ENCODE measurements at regions of chr6 and their contacts with region 1.

Region 1: DNA sequence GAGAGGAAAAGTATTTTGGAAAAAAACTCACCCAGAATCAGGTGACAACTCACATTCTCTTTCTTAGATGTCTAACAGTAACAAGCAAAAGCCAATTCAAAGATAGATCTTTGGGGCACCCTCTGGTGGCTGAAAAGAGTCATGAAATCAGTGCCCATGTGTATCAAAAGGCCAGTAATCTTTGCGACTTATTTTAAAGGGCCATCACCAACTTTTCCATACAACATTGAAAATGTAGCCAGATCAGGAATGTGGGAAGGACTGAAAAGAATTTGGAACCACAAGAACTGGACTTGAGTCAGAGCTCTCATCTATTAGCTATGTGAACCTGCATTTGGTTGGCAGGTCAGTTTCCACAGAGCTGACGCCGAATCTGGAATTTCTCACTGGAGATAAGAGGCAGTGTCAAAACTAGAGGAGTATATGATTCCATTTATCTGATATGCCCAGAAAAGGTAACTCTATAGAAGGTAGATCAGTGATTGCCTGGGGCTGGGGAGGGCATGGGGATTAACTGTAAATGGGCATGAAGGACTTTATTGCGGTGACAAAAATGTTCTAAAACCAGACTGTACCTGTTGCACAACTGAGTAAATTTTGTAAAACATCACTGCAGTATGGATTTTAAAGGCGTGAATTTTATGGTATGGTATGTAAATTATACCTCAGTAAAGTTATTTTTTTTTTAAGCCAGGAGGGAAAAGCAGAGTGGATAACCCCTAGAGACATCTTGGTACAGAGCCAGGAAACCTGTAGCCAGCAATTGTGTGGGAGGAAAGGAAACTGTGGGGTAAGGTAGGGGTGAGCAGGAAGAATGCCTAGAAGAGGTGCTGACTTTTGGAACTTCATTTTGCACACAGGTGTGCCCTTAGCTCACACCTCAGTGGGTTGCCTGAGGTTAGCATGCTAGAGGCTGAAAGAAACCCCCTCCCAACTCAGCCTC is 117.1 kb upstream of the ASF1A start:
- DNase-seq: peak; percentile 79
- ATAC-seq: peak; percentile 87
- H3K4me3 ChIP-seq: no peak overlapping the region
- H3K27ac ChIP-seq: no peak overlapping the region
- H3K4me1 ChIP-seq: peaks cover 4% of the 10 kb centered on the region; the same call in 1 of the 2 replicates
- H3K27me3 ChIP-seq: peaks cover 4% of the 10 kb centered on the region
- CTCF ChIP-seq: peak; percentile 73
- POLR2A ChIP-seq: no peak
- RAD21 ChIP-seq: peak; percentile 72

Region 2: GRCh38 chr6:118397671-118398465 is 379.0 kb before region 1 on chr6:
- CTCF ChIA-PET with region 1: no interaction called
- POLR2A ChIA-PET with region 1: no interaction called
- dilution Hi-C with region 1: no loop called
- in situ Hi-C with region 1: no loop called
- intact Hi-C with region 1: no loop called
- DNase-seq: no peak
- ATAC-seq: no peak
- H3K4me3 ChIP-seq: no peak overlapping the region
- H3K27ac ChIP-seq: no peak overlapping the region
- H3K4me1 ChIP-seq: no peaks in the 10 kb centered on the region
- H3K27me3 ChIP-seq: no peaks in the 10 kb centered on the region
- CTCF ChIP-seq: no peak
- POLR2A ChIP-seq: no peak
- RAD21 ChIP-seq: no peak

Region 3: DNA sequence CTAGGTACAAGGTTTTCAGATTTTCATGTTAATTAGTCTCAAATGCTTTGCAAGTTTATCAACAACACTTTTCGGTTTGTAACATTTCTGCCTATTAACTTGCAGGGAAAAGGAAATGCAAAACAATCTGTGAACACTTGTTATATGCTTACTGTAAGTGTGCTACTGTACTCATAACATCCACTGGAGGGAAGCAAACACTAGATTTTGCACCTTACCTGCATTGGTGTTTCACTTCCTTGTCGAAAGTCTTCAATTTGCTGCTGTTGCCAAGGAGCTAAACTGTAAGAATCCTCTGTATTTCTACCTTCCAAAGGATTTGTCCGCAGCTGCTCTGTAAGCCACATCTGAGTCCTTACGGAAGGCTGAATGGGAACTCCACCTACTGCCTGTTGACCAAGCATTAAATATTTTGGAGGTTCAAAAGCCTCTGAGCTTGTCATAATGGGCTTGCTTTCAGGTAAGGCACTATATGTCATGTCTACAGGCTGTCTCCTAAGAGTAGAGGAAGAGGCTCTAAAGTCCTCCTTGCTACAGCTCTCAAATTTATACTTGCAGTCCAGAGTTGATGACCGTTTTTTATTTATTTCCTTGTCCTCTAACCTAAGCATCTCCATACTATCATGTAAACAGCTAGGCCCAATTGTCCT is 211.4 kb before region 1 on chr6:
- CTCF ChIA-PET with region 1: no interaction called
- POLR2A ChIA-PET with region 1: no interaction called
- dilution Hi-C with region 1: no loop called
- in situ Hi-C with region 1: no loop called
- intact Hi-C with region 1: loop called (anchors 5 kb)
- DNase-seq: peak; percentile 33
- ATAC-seq: no peak
- H3K4me3 ChIP-seq: no peak overlapping the region
- H3K27ac ChIP-seq: no peak overlapping the region
- H3K4me1 ChIP-seq: peaks cover 3% of the 10 kb centered on the region
- H3K27me3 ChIP-seq: no peaks in the 10 kb centered on the region
- CTCF ChIP-seq: peak; percentile 31; the same call in 1 of the 2 replicates
- POLR2A ChIP-seq: no peak
- RAD21 ChIP-seq: peak; percentile 46

Region 4: DNA sequence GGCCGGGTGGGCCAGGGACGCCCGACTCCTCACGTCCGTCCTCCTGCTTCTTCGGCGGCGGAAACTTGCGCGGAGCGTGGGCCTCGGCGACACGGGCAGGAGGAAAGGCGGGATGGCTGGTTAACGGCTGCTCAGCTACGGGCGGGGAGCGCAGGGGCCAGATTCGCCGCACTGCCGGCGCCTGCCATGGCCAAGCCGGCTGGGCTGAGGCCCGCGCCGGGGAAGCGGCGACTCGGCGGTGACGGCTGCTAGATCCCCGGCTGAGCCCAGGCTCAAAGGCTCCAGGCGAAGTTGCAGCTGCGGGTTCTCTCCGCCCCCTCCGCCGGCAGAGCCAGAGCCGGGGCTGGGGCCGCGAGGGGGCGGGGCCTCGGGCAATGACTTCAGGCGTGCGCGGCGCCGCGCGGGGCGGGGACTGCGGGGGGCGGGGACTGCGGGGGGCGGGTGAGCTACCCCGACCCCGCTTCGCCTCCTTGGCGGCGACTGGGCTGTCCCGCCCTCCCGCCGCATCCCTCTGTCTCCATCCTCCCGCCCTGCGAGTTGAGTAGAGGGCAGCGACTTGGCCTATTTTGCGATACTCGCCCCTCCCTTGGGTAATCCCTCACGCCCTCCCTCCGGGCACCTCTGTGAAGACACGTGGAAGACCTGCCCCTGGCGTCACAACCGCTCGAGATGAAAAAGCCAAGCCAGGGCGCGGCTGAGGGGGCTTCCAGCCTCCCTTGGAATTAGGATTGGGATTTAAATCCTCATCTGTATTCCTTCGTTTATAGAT is 125.4 kb before region 1 on chr6 and contains the start of gene CEP85L:
- CTCF ChIA-PET with region 1: no interaction called
- POLR2A ChIA-PET with region 1: no interaction called
- dilution Hi-C with region 1: no loop called
- in situ Hi-C with region 1: no loop called
- intact Hi-C with region 1: loop called (anchors 1 kb)
- DNase-seq: peak; percentile 86
- ATAC-seq: peak; percentile 95
- H3K4me3 ChIP-seq: peak within 1 kb of the TSS; percentile 98
- H3K27ac ChIP-seq: peak within 1 kb of the TSS; percentile 99
- H3K4me1 ChIP-seq: no peaks in the 10 kb centered on the region
- H3K27me3 ChIP-seq: no peaks in the 10 kb centered on the region
- CTCF ChIP-seq: no peak
- POLR2A ChIP-seq: peak; percentile 82
- RAD21 ChIP-seq: no peak
- total RNA-seq, gene CEP85L: 24.2 and 25.6 TPM in 2 replicates

Region 5: GRCh38 chr6:118709859-118710350 is 67.0 kb before region 1 on chr6:
- CTCF ChIA-PET with region 1: interaction called, 4 read pairs
- POLR2A ChIA-PET with region 1: no interaction called
- dilution Hi-C with region 1: no loop called
- in situ Hi-C with region 1: no loop called
- intact Hi-C with region 1: loop called (anchors 5 kb)
- DNase-seq: peak; percentile 86
- ATAC-seq: peak; percentile 30; the same call in 1 of the 2 replicates
- H3K4me3 ChIP-seq: peak overlapping the region; percentile 30; the same call in 1 of the 2 replicates
- H3K27ac ChIP-seq: peak overlapping the region; percentile 67
- H3K4me1 ChIP-seq: peaks cover 10% of the 10 kb centered on the region
- H3K27me3 ChIP-seq: no peaks in the 10 kb centered on the region
- CTCF ChIP-seq: no peak
- POLR2A ChIP-seq: no peak
- RAD21 ChIP-seq: no peak

Region 6: GRCh38 chr6:118934461-118935330 is 157.8 kb after region 1 on chr6 and contains the start of gene MCM9:
- CTCF ChIA-PET with region 1: no interaction called
- POLR2A ChIA-PET with region 1: no interaction called
- dilution Hi-C with region 1: no loop called
- in situ Hi-C with region 1: no loop called
- intact Hi-C with region 1: loop called (anchors 1 kb)
- DNase-seq: peak; percentile 77
- ATAC-seq: peak; percentile 98
- H3K4me3 ChIP-seq: peak within 1 kb of the TSS; percentile 86
- H3K27ac ChIP-seq: peak within 1 kb of the TSS; percentile 55
- H3K4me1 ChIP-seq: no peaks in the 10 kb centered on the region
- H3K27me3 ChIP-seq: no peaks in the 10 kb centered on the region
- CTCF ChIP-seq: no peak
- POLR2A ChIP-seq: peak; percentile 12; the same call in 1 of the 2 replicates
- RAD21 ChIP-seq: no peak
- total RNA-seq, gene MCM9: 7.2 and 7.8 TPM in 2 replicates

Measured in IMR-90 (cell line).